CD4-positive, alpha-beta memory T cell (primary cell): ENCODE measurements at regions of chr11 and their contacts with region 1.

Region 1: DNA sequence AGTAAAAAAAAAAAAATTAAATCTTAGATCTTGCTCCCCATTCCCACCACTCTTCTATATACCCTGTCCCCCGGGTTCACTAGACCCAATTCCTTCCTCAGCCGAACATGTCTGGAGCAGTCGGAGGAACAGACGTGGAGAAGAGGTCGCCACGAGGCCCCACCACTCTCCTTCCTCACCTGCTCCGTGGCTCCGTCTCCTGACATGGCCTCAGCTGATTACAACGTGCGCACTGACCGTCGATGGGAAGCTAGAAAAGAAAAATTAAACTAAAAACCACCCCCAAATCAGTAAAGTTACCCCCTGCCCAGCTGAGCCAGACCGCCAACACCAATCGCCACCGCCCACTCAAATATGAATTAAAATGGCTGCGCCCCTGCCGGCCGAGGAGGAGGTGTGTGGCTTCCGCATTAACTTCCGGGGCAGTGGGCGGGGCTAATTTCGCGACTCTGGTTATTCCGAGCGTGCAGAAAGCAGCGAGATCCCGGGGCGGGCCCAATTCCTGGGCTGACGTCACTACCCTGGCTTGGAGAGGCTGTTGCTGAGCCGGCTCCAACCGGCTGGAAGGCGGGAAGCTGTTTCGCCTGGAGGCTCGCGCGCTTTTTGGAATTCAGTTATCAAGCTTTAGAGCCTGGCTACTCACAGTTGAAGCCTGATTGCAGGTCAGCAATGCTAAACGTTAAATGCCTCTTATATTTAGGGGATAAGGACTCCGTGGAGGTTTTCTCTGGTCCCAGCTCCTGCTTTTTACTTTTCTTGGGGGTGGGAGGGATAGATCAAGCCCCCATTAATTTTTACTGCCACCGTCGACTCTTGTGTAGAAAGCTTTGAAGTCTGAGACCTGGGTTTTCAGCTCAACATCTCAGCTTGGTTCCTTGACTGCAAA is at the start of gene CSTF3:
- DNase-seq: peak; percentile 89 to 96 (median 90)
- H3K4me3 ChIP-seq: peak within 1 kb of the TSS; percentile 94 to 95
- H3K4me3 Mint-ChIP-seq: peak within 1 kb of the TSS; percentile 94 to 100 (median 100)
- H3K27ac ChIP-seq: peak within 1 kb of the TSS; percentile 87
- H3K27ac Mint-ChIP-seq: peak within 1 kb of the TSS; percentile 95 to 100 (median 98)
- H3K4me1 ChIP-seq: peaks cover 48% of the 10 kb centered on the region
- H3K4me1 Mint-ChIP-seq: peaks cover 32 to 64% (median 47%) of the 10 kb centered on the region in 4 donors
- H3K27me3 ChIP-seq: no peaks in the 10 kb centered on the region
- H3K27me3 Mint-ChIP-seq: no peaks in the 10 kb centered on the region
- total RNA-seq, gene CSTF3: 33.5 to 34.0 TPM

Region 2: GRCh38 chr11:32893343-32894148 is 267.8 kb before region 1 on chr11:
- CTCF ChIA-PET with region 1: no interaction called
- POLR2A ChIA-PET with region 1: no interaction called
- intact Hi-C with region 1: loop called (anchors 2 kb)
- DNase-seq: peak in 3 of 5 donors; percentile 36 to 61 (median 38)
- H3K4me3 ChIP-seq: peak overlapping the region; percentile 57 to 72
- H3K4me3 Mint-ChIP-seq: peak overlapping the region; percentile 87 to 96 (median 94)
- H3K27ac ChIP-seq: peak overlapping the region; percentile 58
- H3K27ac Mint-ChIP-seq: peak overlapping the region; percentile 84 to 94 (median 88)
- H3K4me1 ChIP-seq: peaks cover 17% of the 10 kb centered on the region
- H3K4me1 Mint-ChIP-seq: peaks cover 20 to 36% (median 29%) of the 10 kb centered on the region in 4 donors
- H3K27me3 ChIP-seq: no peaks in the 10 kb centered on the region
- H3K27me3 Mint-ChIP-seq: no peaks in the 10 kb centered on the region

Region 3: GRCh38 chr11:33320016-33320813 is 158.9 kb after region 1 on chr11:
- CTCF ChIA-PET with region 1: interaction called, 13 read pairs
- POLR2A ChIA-PET with region 1: no interaction called
- intact Hi-C with region 1: no loop called
- DNase-seq: no peak
- H3K4me3 ChIP-seq: no peak overlapping the region
- H3K4me3 Mint-ChIP-seq: no peak overlapping the region
- H3K27ac ChIP-seq: no peak overlapping the region
- H3K27ac Mint-ChIP-seq: no peak overlapping the region
- H3K4me1 ChIP-seq: peaks cover 40% of the 10 kb centered on the region
- H3K4me1 Mint-ChIP-seq: peaks cover 26 to 43% (median 33%) of the 10 kb centered on the region in 4 donors
- H3K27me3 ChIP-seq: no peaks in the 10 kb centered on the region
- H3K27me3 Mint-ChIP-seq: no peaks in the 10 kb centered on the region

Region 4: DNA sequence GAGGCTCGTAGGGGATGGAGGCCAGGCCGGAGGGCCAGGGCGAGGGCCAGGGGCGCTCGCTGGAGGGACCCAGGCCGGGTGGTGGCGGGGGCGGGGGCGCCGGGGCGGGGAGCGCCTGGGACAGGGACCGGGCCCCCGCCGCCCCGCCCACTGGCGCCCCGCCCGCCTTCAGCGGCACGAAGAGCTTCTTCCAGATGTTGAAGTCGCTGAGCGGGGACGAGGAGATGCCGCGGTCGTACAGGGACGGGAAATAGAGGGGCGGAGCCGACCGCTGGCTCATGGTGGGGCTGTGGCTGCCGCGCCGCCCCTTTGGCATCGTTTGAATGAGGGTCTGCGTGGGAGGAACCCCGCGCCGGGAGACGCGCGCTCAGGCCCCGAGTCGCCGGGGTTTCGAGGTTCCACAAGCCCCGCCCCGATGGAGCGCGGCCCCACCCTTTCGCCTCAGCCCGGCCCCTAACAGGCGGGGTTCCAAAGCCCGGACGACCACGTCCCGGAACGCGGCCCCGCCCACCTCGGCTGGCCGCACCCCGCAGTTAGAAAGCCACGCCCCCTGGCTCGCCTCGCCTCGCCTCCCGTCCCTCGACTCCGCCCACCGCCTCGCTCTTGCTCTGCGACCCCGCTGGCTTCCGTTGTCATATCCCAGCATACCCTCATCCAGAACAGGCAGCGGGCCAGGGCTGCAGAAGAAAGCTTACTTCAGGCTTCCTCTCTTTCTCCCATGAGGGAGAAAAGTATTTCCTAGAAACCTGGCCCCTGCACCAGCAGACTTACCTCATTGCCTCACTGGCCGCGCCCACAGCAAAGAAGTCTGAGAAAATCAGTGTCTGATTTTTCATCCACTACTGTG is 539.3 kb after region 1 on chr11 and contains the start of gene C11orf91:
- CTCF ChIA-PET with region 1: no interaction called
- POLR2A ChIA-PET with region 1: no interaction called
- intact Hi-C with region 1: loop called (anchors 2 kb)
- DNase-seq: peak; percentile 89 to 95 (median 94)
- H3K4me3 ChIP-seq: peak within 1 kb of the TSS; percentile 7 to 53
- H3K4me3 Mint-ChIP-seq: peak within 1 kb of the TSS; percentile 89 to 96 (median 92)
- H3K27ac ChIP-seq: peak within 1 kb of the TSS; percentile 29
- H3K27ac Mint-ChIP-seq: peak within 1 kb of the TSS; percentile 78 to 93 (median 88)
- H3K4me1 ChIP-seq: peaks cover 15% of the 10 kb centered on the region
- H3K4me1 Mint-ChIP-seq: peaks cover 11 to 22% (median 19%) of the 10 kb centered on the region in 4 donors
- H3K27me3 ChIP-seq: no peaks in the 10 kb centered on the region
- H3K27me3 Mint-ChIP-seq: peaks cover 5 to 13% of the 10 kb centered on the region in 2 donors
- total RNA-seq, gene C11orf91: 0.49 TPM in 1 of 2 experiments, not detected in the other

Region 5: DNA sequence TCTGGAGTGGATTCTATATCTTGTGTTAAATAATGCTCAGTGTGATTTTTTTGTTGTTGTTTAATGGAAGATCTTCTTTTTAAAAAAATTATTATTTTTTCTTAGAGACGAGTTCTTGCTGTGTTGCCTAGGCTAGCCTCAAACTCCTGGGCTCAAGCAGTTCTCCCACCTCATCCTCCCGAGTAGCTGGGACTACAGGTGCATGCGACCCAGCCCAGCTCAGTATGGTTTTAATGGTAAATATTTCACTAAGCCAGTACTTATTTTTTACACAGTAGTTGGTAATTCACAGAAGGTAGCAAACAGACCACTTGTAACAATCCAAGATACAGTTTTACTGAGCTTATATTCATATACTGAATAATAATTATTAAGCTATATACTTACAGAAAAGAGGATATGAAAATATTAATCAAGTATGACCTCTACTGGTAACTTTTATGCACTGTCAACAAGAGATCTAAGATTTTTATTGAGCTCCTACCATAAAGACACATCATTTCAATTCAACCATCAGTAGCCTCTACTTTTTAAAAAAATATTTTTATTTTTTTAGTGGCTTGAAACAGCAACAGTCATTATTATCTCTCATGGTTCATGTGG is 581.0 kb after region 1 on chr11:
- CTCF ChIA-PET with region 1: interaction called, 7 read pairs
- POLR2A ChIA-PET with region 1: no interaction called
- intact Hi-C with region 1: loop called (anchors 2 kb)
- DNase-seq: peak in 4 of 5 donors; percentile 15 to 35 (median 34)
- H3K4me3 ChIP-seq: no peak overlapping the region
- H3K4me3 Mint-ChIP-seq: no peak overlapping the region
- H3K27ac ChIP-seq: no peak overlapping the region
- H3K27ac Mint-ChIP-seq: peak overlapping the region in 1 of 7 donors; percentile 41
- H3K4me1 ChIP-seq: no peaks in the 10 kb centered on the region
- H3K4me1 Mint-ChIP-seq: peaks cover 0 to 4% (median 3%) of the 10 kb centered on the region in 4 donors
- H3K27me3 ChIP-seq: no peaks in the 10 kb centered on the region
- H3K27me3 Mint-ChIP-seq: no peaks in the 10 kb centered on the region